Breast epithelium (tissue), 4 donors: ENCODE measurements at regions of chr2 and their contacts with region 1.

Region 1: DNA sequence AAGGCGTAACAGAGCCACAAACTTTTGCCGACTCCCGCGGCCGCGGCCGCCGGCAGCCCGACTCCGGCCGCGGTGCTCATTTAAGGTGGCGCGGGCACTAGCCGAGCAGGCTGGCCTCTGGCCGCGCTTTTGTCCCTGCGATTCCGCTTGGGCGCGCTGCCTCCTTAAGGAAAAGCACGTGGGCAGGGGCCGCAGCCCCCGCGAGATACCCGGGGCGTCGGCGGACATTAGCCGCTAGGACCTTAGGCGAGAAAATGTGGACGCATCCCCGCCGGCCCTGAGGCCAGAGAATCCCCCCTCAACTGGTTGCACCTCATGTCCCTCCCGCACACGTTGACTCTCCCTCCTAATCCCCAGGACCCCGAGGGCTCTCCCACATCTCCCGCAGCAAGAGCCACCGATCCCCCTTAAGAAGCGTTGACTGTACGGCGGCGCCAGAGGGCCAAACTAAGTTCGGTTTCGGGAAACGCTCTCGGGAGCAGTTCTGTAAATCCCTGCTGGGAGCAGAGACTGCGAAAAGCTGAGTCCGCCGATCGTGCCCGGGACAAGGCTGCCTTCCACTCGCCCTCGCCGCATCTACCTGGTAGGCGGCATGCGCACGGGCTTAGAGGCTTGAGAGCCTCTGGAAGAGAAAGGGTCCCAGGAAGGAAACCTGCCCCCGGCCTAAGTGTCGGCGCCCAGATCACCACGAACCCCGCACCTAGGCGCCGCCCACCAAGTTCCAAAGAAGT is 1.7 kb upstream of the SATB2 start:
- DNase-seq: peak; percentile 70 to 81
- H3K4me3 ChIP-seq: peak overlapping the region; percentile 63 to 90 (median 73)
- H3K27ac ChIP-seq: peak overlapping the region; percentile 15 to 46
- H3K4me1 ChIP-seq: peaks cover 10% of the 10 kb centered on the region in 2 donors
- H3K27me3 ChIP-seq: peaks cover 17 to 79% of the 10 kb centered on the region in 2 donors
- CTCF ChIP-seq: no peak
- POLR2A ChIP-seq: no peak

Region 2: GRCh38 chr2:197499594-197500526 is 1959.6 kb before region 1 on chr2 and contains the starts of genes HSPD1 and HSPE1:
- intact Hi-C with region 1: loop called (anchors 5 kb)
- DNase-seq: peak; percentile 96 to 97
- H3K4me3 ChIP-seq: peak within 1 kb of the TSS; percentile 77 to 92 (median 80)
- H3K27ac ChIP-seq: peak within 1 kb of the TSS; percentile 97 to 98
- H3K4me1 ChIP-seq: peaks cover 0 to 26% of the 10 kb centered on the region in 2 donors
- H3K27me3 ChIP-seq: no peaks in the 10 kb centered on the region
- CTCF ChIP-seq: peak; percentile 5 to 37 (median 34)
- POLR2A ChIP-seq: peak; percentile 72
- total RNA-seq, gene HSPD1: 108 to 227 (median 205) TPM
- total RNA-seq, gene HSPE1: 74.9 to 170 (median 124) TPM

Region 3: GRCh38 chr2:199524689-199525574 is 65.5 kb after region 1 on chr2:
- intact Hi-C with region 1: no loop called
- DNase-seq: no peak
- H3K4me3 ChIP-seq: no peak overlapping the region
- H3K27ac ChIP-seq: no peak overlapping the region
- H3K4me1 ChIP-seq: no peaks in the 10 kb centered on the region
- H3K27me3 ChIP-seq: no peaks in the 10 kb centered on the region
- CTCF ChIP-seq: no peak
- POLR2A ChIP-seq: no peak